Motor neuron (in vitro differentiated cells): ENCODE measurements at regions of chr17 and their contacts with region 1.

Region 1: GRCh38 chr17:22703786-22704441 is 1011.6 kb downstream of the KCNJ18 start:
- ATAC-seq: peak in 3 of 8 experiments; percentile 33 to 90 (median 34)
- H3K4me3 ChIP-seq: no peak overlapping the region
- H3K27ac ChIP-seq: no peak overlapping the region
- H3K4me1 ChIP-seq: no peaks in the 10 kb centered on the region

Region 2: GRCh38 chr17:20797292-20797691 is 1906.6 kb before region 1 on chr17:
- in situ Hi-C with region 1: no loop called
- ATAC-seq: no peak
- H3K4me3 ChIP-seq: no peak overlapping the region
- H3K27ac ChIP-seq: no peak overlapping the region
- H3K4me1 ChIP-seq: no peaks in the 10 kb centered on the region

Region 3: GRCh38 chr17:22654447-22654846 is 49.5 kb before region 1 on chr17:
- in situ Hi-C with region 1: loop called in 1 of 9 experiments (anchors 10 kb)
- ATAC-seq: peak in 3 of 8 experiments; percentile 38 to 98 (median 83)
- H3K4me3 ChIP-seq: no peak overlapping the region
- H3K27ac ChIP-seq: no peak overlapping the region
- H3K4me1 ChIP-seq: no peaks in the 10 kb centered on the region